OCI-LY7 (cell line): ENCODE measurements at regions of chr4 and their contacts with region 1.

Region 1: GRCh38 chr4:143417679-143418403 is 81.2 kb downstream of the GAB1 start:
- DNase-seq: peak; percentile 71
- H3K4me3 ChIP-seq: peak overlapping the region; percentile 50
- H3K27ac ChIP-seq: peak overlapping the region; percentile 98
- H3K4me1 ChIP-seq: peaks cover 85% of the 10 kb centered on the region
- CTCF ChIP-seq: no peak

Region 2: GRCh38 chr4:143025081-143025704 is 392.6 kb before region 1 on chr4:
- CTCF ChIA-PET with region 1: no interaction called
- POLR2A ChIA-PET with region 1: no interaction called
- intact Hi-C with region 1: no loop called
- DNase-seq: no peak
- H3K4me3 ChIP-seq: no peak overlapping the region
- H3K27ac ChIP-seq: no peak overlapping the region
- H3K4me1 ChIP-seq: no peaks in the 10 kb centered on the region
- CTCF ChIP-seq: peak; percentile 40; the same call in 1 of the 2 replicates

Region 3: DNA sequence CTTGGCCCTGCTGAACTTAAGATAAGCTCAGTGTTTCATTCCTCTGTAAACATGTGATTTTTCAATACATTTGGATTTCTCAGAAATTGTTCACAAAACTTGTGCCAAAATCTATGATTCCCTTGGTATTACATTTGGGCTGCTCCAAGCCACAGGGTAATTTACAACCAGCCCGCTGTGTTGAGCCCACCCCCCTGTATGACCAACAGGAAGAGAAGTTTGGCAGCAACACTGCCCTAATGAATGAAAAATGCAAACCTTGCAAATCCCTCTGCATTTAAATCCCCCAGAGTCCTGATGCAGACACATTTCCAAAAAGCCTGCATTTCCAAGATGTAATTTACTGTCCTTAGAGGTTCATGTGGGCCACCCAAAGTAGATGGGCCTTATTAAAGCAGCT is 115.3 kb before region 1 on chr4:
- CTCF ChIA-PET with region 1: no interaction called
- POLR2A ChIA-PET with region 1: no interaction called
- intact Hi-C with region 1: no loop called
- DNase-seq: no peak
- H3K4me3 ChIP-seq: no peak overlapping the region
- H3K27ac ChIP-seq: no peak overlapping the region
- H3K4me1 ChIP-seq: no peaks in the 10 kb centered on the region
- CTCF ChIP-seq: no peak

Region 4: GRCh38 chr4:143358923-143359643 is 58.8 kb before region 1 on chr4:
- CTCF ChIA-PET with region 1: interaction called, 3 read pairs
- POLR2A ChIA-PET with region 1: interaction called, 63 read pairs
- intact Hi-C with region 1: loop called (anchors 2 kb)
- DNase-seq: peak; percentile 91
- H3K4me3 ChIP-seq: peak overlapping the region; percentile 61
- H3K27ac ChIP-seq: peak overlapping the region; percentile 98
- H3K4me1 ChIP-seq: peaks cover 96% of the 10 kb centered on the region
- CTCF ChIP-seq: no peak

Region 5: DNA sequence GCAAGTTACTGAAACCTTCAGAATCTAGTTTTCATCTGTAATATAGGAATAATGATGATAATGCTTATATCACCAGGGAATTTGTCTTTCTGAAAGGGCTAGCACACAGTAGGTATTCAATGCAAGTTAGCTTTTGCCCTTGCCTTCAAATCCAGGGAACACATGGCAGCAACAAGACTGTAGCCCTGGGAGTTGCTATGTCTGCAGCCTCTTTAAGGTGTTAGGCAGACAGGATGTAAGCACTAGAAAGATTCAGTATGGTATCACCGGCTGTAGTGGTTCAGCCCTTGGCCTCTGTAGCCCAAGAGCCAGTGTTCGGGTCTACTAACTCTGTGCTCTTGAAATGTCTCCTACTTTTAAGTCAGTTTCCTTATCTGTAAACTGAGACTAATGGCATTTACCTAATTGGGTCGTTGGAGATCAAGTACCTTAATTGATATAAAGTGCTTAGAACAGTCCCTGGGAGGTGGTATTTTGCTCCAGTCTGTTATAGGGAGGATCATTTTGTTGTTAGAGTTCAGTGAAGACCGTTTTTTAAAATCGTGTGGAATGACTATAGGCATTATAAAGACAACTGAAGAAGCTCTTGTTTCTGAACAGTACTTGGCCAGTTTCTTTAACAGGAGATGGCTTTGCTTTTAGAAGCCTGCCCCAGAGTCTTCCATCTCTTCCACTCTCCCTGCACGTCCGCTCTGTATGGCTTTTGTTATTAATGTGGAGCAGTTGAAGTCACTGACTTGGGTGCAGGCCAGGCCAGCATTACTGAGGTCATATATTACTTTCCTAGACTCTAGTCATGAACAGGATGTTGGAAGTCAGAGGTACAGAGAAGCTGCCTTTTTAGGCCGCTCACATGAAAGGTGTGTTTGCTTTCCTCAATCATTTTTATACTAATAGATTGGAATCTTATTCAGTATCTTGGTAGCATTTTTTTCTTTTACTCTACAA is 36.4 kb before region 1 on chr4:
- CTCF ChIA-PET with region 1: interaction called, 6 read pairs
- POLR2A ChIA-PET with region 1: interaction called, 75 read pairs
- intact Hi-C with region 1: loop called (anchors 2 kb)
- DNase-seq: peak; percentile 80
- H3K4me3 ChIP-seq: peak overlapping the region; percentile 18
- H3K27ac ChIP-seq: peak overlapping the region; percentile 81
- H3K4me1 ChIP-seq: peaks cover 100% of the 10 kb centered on the region
- CTCF ChIP-seq: no peak

Region 6: DNA sequence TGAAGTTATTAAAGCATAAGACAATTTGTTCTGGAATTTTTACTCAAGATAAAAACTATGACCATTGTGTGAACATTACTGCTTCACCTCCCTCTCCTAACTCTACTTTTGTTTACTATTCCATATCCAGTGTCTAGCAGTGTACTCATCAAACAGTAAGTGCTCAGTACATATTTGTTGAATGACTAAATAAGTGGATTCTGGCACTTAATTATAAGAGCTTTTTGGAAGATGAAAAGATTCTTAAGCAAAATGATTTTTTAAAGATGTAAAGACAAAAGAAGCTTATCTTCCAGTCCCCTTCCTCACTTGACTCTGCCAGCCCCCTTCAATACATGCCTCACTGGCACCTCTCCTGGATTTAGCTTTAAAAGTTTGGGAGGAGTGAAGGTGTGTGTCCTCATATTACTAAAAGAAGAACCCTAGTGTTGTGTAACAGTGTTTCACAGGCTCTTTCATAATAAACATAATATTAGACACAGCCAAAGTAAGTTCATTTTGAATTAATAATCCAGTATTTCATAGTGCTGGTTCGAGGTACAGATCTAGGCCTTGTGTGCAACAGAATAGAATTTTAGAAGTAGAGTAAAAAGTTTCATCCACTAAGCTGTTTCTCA is 28.2 kb before region 1 on chr4:
- CTCF ChIA-PET with region 1: no interaction called
- POLR2A ChIA-PET with region 1: interaction called, 59 read pairs
- intact Hi-C with region 1: no loop called
- DNase-seq: no peak
- H3K4me3 ChIP-seq: peak overlapping the region; percentile 5
- H3K27ac ChIP-seq: peak overlapping the region; percentile 96
- H3K4me1 ChIP-seq: peaks cover 80% of the 10 kb centered on the region
- CTCF ChIP-seq: no peak

Region 7: GRCh38 chr4:143399113-143399949 is 18.5 kb before region 1 on chr4:
- CTCF ChIA-PET with region 1: interaction called, 3 read pairs
- POLR2A ChIA-PET with region 1: interaction called, 104 read pairs
- intact Hi-C with region 1: loop called (anchors 1 kb)
- DNase-seq: peak; percentile 72
- H3K4me3 ChIP-seq: peak overlapping the region; percentile 12
- H3K27ac ChIP-seq: peak overlapping the region; percentile 97
- H3K4me1 ChIP-seq: peaks cover 99% of the 10 kb centered on the region
- CTCF ChIP-seq: peak; percentile 97

Region 8: GRCh38 chr4:143431526-143432257 is 13.9 kb after region 1 on chr4:
- CTCF ChIA-PET with region 1: no interaction called
- POLR2A ChIA-PET with region 1: interaction called, 22 read pairs
- intact Hi-C with region 1: no loop called
- DNase-seq: no peak
- H3K4me3 ChIP-seq: no peak overlapping the region
- H3K27ac ChIP-seq: peak overlapping the region; percentile 5
- H3K4me1 ChIP-seq: peaks cover 57% of the 10 kb centered on the region
- CTCF ChIP-seq: no peak